ENCODE measurements at regions of chr10 and their contacts with region 1.

Region 1: DNA sequence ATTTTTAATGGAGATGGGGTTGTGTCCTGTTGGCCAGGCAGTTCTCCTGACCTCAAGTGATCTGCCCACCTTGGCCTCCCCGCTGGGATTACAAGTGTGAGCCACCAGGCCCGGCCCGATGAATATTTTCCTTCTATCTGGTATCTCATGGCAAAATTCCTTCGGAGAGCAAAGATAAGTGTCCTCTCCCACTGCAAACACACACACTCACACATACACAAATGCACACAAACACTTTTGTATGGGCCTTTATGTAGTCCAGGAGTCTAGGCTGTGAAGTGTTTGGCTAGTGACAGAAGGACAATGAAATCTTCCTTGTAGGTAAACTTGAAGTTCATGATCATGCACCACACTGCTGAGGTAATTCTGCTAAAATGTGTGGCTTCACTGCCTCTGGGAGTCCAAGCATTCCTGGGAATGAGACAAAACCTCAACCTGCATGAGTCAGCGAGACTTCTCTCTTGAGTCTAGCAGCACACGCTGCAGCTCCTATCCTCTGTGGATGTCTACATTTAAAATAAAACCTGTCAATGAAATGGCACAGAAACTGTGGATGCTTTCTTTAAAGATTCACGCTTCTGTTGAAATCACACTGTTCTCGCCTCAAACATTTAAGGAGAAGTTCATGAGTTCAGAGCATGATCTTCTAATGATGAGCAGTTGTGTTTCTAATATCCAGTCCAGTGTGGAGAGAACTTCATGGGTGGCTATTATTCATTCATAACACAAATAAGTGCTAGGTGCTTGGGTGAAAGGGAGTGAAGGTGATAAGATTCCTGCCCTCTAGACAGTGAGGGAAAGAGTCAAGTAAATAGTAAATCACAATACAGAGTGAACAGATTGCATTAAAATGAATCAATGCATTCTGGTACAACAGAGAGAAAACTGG is 96.5 kb downstream of the NRP1 start:
- DNase-seq: peak; percentile 100
- ATAC-seq: peak; percentile 94
- H3K4me3 ChIP-seq: peak overlapping the region; percentile 2; the same call in 1 of the 2 replicates
- H3K27ac ChIP-seq: peak overlapping the region; percentile 66
- H3K4me1 ChIP-seq: peaks cover 61% of the 10 kb centered on the region
- H3K27me3 ChIP-seq: no peaks in the 10 kb centered on the region
- CTCF ChIP-seq: no peak

Region 2: GRCh38 chr10:32386623-32387260 is 851.2 kb before region 1 on chr10:
- CTCF ChIA-PET with region 1: no interaction called
- POLR2A ChIA-PET with region 1: interaction called, 11 read pairs
- intact Hi-C with region 1: no loop called
- DNase-seq: peak; percentile 59
- ATAC-seq: no peak
- H3K4me3 ChIP-seq: peak overlapping the region; percentile 12; the same call in 1 of the 2 replicates
- H3K27ac ChIP-seq: 0 out of 2 replicates have a peak overlapping the region, but pooled peaks have one; percentile 2
- H3K4me1 ChIP-seq: peaks cover 40% of the 10 kb centered on the region
- H3K27me3 ChIP-seq: no peaks in the 10 kb centered on the region
- CTCF ChIP-seq: no peak

Region 3: GRCh38 chr10:32906595-32906994 is 331.4 kb before region 1 on chr10:
- CTCF ChIA-PET with region 1: no interaction called
- POLR2A ChIA-PET with region 1: no interaction called
- intact Hi-C with region 1: no loop called
- DNase-seq: no peak
- ATAC-seq: no peak
- H3K4me3 ChIP-seq: no peak overlapping the region
- H3K27ac ChIP-seq: no peak overlapping the region
- H3K4me1 ChIP-seq: no peaks in the 10 kb centered on the region
- H3K27me3 ChIP-seq: no peaks in the 10 kb centered on the region
- CTCF ChIP-seq: no peak

Region 4: DNA sequence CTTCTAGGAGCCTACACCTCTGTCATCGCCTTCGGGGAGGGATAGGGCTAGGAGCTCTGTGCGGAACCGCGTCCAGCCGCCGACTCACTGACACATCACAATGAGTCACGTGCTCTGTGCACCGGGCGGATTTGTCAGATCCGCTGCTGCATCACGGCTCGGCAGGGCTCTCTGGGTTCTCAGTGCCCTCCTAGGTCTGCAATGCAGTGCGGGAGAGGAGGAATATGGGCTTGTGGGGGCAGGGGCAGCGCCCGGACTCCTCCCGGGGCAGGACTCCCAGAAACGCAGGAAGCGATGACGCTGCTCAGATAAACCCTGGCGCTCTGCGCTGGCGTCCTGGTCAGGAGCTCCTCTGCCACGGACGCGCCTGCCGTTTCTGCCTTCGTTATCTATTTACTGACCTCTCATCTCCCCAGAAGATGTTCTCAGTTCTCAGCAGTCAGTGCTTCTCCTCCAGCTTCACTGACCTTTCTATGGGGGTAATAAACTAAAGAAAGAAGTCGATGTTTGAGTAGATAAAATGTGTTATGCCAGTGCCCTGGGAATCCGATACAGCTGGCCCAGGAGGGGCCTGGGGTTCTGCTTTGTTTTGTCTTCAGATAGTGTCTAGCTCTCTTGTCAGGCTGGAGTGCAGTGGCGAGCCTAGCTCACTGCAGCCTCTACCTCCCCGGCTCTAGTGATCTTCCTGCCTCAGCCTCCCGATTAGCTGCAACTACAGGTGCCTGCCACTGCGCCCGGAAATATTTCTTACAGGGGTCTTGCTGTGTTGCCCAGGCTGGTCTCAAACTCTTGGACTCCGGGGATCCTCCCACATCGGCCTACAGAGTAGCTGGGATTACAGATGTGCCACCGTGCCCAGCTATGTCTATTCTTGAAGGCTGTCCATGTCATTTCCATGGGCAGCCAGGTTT is 257.2 kb before region 1 on chr10:
- CTCF ChIA-PET with region 1: no interaction called
- POLR2A ChIA-PET with region 1: no interaction called
- intact Hi-C with region 1: no loop called
- DNase-seq: peak; percentile 100
- ATAC-seq: peak; percentile 83
- H3K4me3 ChIP-seq: peak overlapping the region; percentile 61
- H3K27ac ChIP-seq: peak overlapping the region; percentile 94
- H3K4me1 ChIP-seq: peaks cover 63% of the 10 kb centered on the region
- H3K27me3 ChIP-seq: no peaks in the 10 kb centered on the region
- CTCF ChIP-seq: no peak

Region 5: GRCh38 chr10:33193057-33193700 is 44.8 kb before region 1 on chr10:
- CTCF ChIA-PET with region 1: interaction called, 4 read pairs
- POLR2A ChIA-PET with region 1: no interaction called
- intact Hi-C with region 1: loop called (anchors 1 kb)
- DNase-seq: peak; percentile 100
- ATAC-seq: peak; percentile 74
- H3K4me3 ChIP-seq: no peak overlapping the region
- H3K27ac ChIP-seq: peak overlapping the region; percentile 72
- H3K4me1 ChIP-seq: peaks cover 54% of the 10 kb centered on the region
- H3K27me3 ChIP-seq: no peaks in the 10 kb centered on the region
- CTCF ChIP-seq: no peak

Region 6: GRCh38 chr10:33199731-33200232 is 38.2 kb before region 1 on chr10:
- CTCF ChIA-PET with region 1: no interaction called
- POLR2A ChIA-PET with region 1: no interaction called
- intact Hi-C with region 1: loop called (anchors 1 kb)
- DNase-seq: peak; percentile 98
- ATAC-seq: peak; percentile 57
- H3K4me3 ChIP-seq: no peak overlapping the region
- H3K27ac ChIP-seq: peak overlapping the region; percentile 26
- H3K4me1 ChIP-seq: peaks cover 57% of the 10 kb centered on the region
- H3K27me3 ChIP-seq: no peaks in the 10 kb centered on the region
- CTCF ChIP-seq: no peak

Region 7: DNA sequence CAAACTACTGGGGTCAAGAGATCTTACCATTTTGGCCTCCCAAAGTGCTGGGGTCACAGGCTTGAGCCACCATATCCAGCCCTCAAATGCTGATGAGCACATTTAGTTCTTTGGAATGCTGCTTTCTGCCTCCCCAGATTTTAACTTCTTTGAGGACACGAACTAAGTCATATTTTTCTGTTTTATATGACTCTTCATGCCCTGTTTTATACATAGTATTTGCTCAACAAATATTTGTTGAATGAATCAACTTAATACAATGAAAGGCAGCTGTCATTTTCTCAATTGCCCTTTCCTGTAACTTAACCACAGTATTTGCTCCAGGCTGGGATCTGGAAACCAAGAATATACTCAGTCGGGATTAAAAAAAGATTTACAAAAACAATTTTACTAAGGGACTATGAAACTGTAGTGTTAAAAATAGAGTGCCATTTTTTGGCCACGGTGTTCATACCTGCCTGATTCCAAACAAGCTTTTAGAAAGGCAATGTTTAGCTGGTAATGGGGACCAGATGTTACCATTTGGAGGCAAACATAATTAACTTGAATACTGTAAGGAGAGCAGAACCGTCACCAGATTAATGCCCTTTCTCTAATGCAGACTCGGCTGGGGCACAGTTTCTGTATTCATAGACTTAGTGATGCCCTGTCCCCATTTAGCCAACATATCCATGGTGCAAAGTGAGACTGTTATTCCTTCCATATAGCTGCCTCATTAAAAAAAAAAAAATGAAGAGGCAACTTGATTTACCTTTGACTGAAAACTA is 21.1 kb before region 1 on chr10:
- CTCF ChIA-PET with region 1: no interaction called
- POLR2A ChIA-PET with region 1: interaction called, 14 read pairs
- intact Hi-C with region 1: loop called (anchors 1 kb)
- DNase-seq: peak; percentile 100
- ATAC-seq: peak; percentile 91
- H3K4me3 ChIP-seq: peak overlapping the region; percentile 6; the same call in 1 of the 2 replicates
- H3K27ac ChIP-seq: peak overlapping the region; percentile 65
- H3K4me1 ChIP-seq: peaks cover 46% of the 10 kb centered on the region
- H3K27me3 ChIP-seq: no peaks in the 10 kb centered on the region
- CTCF ChIP-seq: no peak

Region 8: GRCh38 chr10:33248638-33249037 is 10.7 kb after region 1 on chr10:
- CTCF ChIA-PET with region 1: no interaction called
- POLR2A ChIA-PET with region 1: interaction called, 9 read pairs
- intact Hi-C with region 1: loop called (anchors 1 kb)
- DNase-seq: peak; percentile 100
- ATAC-seq: peak; percentile 43
- H3K4me3 ChIP-seq: no peak overlapping the region
- H3K27ac ChIP-seq: peak overlapping the region; percentile 65
- H3K4me1 ChIP-seq: peaks cover 52% of the 10 kb centered on the region
- H3K27me3 ChIP-seq: no peaks in the 10 kb centered on the region
- CTCF ChIP-seq: no peak

Region 9: DNA sequence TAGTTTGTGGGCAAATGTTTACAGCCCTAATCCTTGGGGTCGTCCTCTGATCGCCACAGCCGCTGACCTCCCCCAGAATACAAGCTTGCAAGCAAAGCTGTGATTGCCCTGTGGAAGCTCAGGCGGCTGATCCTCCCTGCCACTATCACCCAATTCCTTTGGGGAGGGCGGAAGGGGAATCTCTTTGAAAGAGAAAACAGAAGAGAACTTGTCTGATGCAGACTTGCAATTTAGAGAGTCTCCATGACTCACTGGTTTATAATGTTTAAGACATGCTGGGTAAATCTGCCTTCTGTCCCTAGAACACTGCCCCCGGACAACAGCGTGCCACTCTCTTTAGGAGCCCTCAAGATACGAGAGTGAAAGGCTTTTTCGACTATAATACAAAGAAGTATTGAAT is 21.0 kb after region 1 on chr10:
- CTCF ChIA-PET with region 1: interaction called, 6 read pairs
- POLR2A ChIA-PET with region 1: interaction called, 4 read pairs
- intact Hi-C with region 1: loop called (anchors 1 kb)
- DNase-seq: peak; percentile 98
- ATAC-seq: peak; percentile 52
- H3K4me3 ChIP-seq: no peak overlapping the region
- H3K27ac ChIP-seq: peak overlapping the region; percentile 65
- H3K4me1 ChIP-seq: peaks cover 86% of the 10 kb centered on the region
- H3K27me3 ChIP-seq: no peaks in the 10 kb centered on the region
- CTCF ChIP-seq: no peak

Measured in PC-3 (cell line).